Endothelial cell of umbilical vein (primary cell): ENCODE measurements at regions of chr6 and their contacts with region 1.

Region 1: GRCh38 chr6:15691250-15691869 is 28.5 kb upstream of the DTNBP1 start:
- DNase-seq: peak; percentile 86
- H3K4me3 ChIP-seq: no peak overlapping the region
- H3K27ac ChIP-seq: no peak overlapping the region
- H3K4me1 ChIP-seq: peaks cover 3% of the 10 kb centered on the region
- H3K27me3 ChIP-seq: peaks cover 1 to 2% of the 10 kb centered on the region in 2 experiments
- CTCF ChIP-seq: peak; percentile 99 to 100
- POLR2A ChIP-seq: no peak

Region 2: DNA sequence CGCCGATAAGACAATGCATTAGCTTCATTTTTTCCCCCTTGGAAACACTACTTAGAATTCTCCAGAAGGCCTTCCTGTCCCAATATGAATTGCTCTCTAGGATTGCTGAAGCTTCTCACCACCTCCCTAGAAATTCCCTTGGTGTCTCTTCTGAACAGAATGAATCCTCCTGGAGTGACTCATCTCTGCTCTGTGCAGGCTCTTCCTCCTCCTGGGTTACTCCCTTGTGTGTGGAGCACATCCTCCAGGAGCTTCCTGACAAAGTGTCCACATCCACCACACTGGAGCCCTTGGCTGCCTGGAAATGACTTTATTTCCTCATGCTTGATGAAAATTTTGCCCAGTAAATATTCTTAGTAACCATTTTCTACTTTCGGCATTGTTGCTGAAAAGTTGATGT is 83.0 kb before region 1 on chr6:
- CTCF ChIA-PET with region 1: no interaction called
- POLR2A ChIA-PET with region 1: no interaction called
- dilution Hi-C with region 1: no loop called
- intact Hi-C with region 1: no loop called
- DNase-seq: peak; percentile 69
- H3K4me3 ChIP-seq: peak overlapping the region in 1 of 3 experiments; percentile 27
- H3K27ac ChIP-seq: peak overlapping the region; percentile 59
- H3K4me1 ChIP-seq: peaks cover 13% of the 10 kb centered on the region
- H3K27me3 ChIP-seq: no peaks in the 10 kb centered on the region
- CTCF ChIP-seq: no peak
- POLR2A ChIP-seq: no peak

Region 3: GRCh38 chr6:15870333-15871043 is 179.1 kb after region 1 on chr6:
- CTCF ChIA-PET with region 1: interaction called, 5 read pairs
- POLR2A ChIA-PET with region 1: no interaction called
- dilution Hi-C with region 1: no loop called
- intact Hi-C with region 1: loop called (anchors 5 kb)
- DNase-seq: peak; percentile 91
- H3K4me3 ChIP-seq: no peak overlapping the region
- H3K27ac ChIP-seq: peak overlapping the region; percentile 36
- H3K4me1 ChIP-seq: peaks cover 29% of the 10 kb centered on the region
- H3K27me3 ChIP-seq: no peaks in the 10 kb centered on the region
- CTCF ChIP-seq: no peak
- POLR2A ChIP-seq: no peak

Region 4: DNA sequence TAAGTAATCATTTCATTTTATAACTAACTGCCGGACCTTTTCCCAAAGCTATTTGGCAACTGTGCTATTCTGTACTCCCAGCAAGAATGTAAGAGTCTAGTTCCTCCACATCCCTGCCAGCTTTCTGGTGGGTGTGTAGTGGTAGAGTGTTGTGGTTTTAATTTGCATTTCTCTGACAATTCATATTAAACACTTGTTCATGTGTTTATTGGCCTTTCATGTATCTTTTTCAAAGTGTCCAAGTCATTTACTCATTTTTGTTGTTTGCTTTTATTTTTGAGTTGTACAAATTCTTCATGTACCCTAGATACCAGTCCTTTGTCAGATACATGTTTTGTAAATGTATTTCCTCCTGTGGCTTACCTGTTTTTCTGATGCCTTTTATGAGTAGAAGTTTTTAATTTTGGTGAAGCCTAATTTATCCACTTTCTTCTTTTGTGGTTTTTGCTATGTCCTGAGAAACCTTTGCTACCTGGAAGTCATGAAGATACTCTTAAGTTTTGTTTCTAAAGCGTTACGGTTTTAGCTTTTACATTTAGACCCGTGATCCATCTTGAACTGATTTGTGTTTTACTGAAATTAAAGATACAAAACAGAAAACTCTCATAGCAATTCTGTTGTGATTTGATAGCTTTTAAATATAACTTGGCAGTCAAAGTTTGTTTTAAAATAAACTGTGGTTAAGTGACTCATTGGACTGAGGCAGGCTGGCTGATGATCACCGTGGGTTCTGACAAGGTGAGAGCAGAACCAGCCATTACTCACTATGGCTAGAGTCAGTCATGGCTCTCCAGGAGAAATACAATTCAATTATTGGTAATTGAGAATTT is 445.5 kb after region 1 on chr6:
- CTCF ChIA-PET with region 1: interaction called, 28 read pairs
- POLR2A ChIA-PET with region 1: interaction called, 6 read pairs
- dilution Hi-C with region 1: no loop called
- intact Hi-C with region 1: no loop called
- DNase-seq: peak; percentile 64
- H3K4me3 ChIP-seq: no peak overlapping the region
- H3K27ac ChIP-seq: no peak overlapping the region
- H3K4me1 ChIP-seq: peaks cover 24% of the 10 kb centered on the region
- H3K27me3 ChIP-seq: no peaks in the 10 kb centered on the region
- CTCF ChIP-seq: no peak
- POLR2A ChIP-seq: no peak

Region 5: DNA sequence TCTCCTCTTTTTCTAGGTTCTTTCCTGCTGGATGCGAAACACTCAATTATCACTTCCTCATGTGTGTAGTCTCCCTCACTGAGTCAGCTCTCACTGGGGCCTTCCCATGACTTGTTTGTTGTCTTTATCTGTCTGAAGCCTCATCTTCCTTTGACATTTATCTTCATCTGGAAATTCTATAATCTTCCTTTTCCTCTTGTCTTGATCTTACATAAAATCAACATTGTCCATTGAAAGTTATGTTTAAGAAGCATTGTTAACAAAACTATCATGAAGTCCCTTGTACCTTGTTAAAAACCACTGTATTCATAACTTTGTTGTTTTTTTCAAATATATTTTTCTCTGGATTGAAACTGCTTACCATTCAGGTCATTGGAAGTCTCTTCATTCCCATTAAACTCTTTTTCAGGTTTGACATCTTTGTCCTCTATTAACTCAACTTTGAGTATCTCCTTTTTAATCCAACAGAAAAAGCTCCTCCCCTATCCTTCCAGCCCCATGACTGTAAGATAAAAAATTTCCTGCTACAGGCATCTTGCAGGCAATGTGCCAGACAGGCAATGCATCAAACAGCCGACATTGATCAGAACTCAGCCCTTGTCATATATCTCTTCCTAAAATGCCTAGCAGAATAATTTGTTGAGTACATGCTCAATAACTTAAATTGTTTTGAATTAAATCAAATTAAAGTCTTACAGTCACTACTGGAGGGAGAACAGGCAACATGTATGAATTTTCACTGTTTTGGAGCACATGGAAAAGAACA is 472.4 kb after region 1 on chr6:
- CTCF ChIA-PET with region 1: interaction called, 79 read pairs
- POLR2A ChIA-PET with region 1: interaction called, 3 read pairs
- dilution Hi-C with region 1: no loop called
- intact Hi-C with region 1: no loop called
- DNase-seq: peak; percentile 41
- H3K4me3 ChIP-seq: no peak overlapping the region
- H3K27ac ChIP-seq: no peak overlapping the region
- H3K4me1 ChIP-seq: peaks cover 7% of the 10 kb centered on the region
- H3K27me3 ChIP-seq: no peaks in the 10 kb centered on the region
- CTCF ChIP-seq: no peak
- POLR2A ChIP-seq: no peak

Region 6: GRCh38 chr6:16206595-16207037 is 515.3 kb after region 1 on chr6:
- CTCF ChIA-PET with region 1: interaction called, 40 read pairs
- POLR2A ChIA-PET with region 1: no interaction called
- dilution Hi-C with region 1: no loop called
- intact Hi-C with region 1: loop called (anchors 1 kb)
- DNase-seq: peak; percentile 90
- H3K4me3 ChIP-seq: no peak overlapping the region
- H3K27ac ChIP-seq: peak overlapping the region; percentile 75
- H3K4me1 ChIP-seq: peaks cover 14% of the 10 kb centered on the region
- H3K27me3 ChIP-seq: no peaks in the 10 kb centered on the region
- CTCF ChIP-seq: peak; percentile 84 to 94
- POLR2A ChIP-seq: no peak